HCT116 (cell line): ENCODE measurements at regions of chr13 and their contacts with region 1.

Region 1: DNA sequence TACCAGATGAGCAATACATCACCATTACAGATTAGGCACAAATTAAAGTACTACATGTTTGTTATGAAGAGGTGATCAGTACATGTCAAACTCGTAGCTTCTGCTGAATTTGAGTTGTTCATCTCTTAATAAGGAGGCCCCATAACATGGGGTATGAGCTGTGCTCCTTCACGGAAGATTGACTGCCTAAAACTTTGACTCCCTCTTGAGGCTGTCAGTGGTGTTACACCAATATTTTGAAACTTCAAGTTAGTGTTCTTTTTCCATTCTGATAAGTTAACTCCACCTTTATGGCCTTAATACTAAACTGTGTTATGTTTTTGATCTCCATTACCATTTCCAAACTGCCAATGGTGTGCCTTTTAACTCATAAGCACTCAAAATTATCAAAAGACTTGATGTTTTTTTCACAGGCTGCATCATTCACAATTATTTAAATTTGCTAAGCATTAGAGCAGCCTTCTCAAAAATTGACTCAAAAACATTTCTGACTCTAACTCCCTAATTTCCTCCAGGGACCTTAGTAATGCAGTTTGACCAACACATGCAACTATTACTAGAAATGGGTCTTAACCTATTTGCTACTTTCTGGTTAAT is 1591.5 kb downstream of the PCDH9 start:
- DNase-seq: peak; percentile 35
- ATAC-seq: peak; percentile 75
- H3K4me3 ChIP-seq: no peak overlapping the region
- H3K27ac ChIP-seq: no peak overlapping the region
- H3K4me1 ChIP-seq: no peaks in the 10 kb centered on the region
- H3K27me3 ChIP-seq: no peaks in the 10 kb centered on the region
- CTCF ChIP-seq: peak; percentile 21 to 73 (median 64); a peak in 4 of 6 replicates
- POLR2A ChIP-seq: no peak
- RAD21 ChIP-seq: peak; percentile 65

Region 2: GRCh38 chr13:64154514-64154913 is 1484.2 kb before region 1 on chr13:
- CTCF ChIA-PET with region 1: no interaction called
- POLR2A ChIA-PET with region 1: no interaction called
- RAD21 ChIA-PET with region 1: no interaction called
- intact Hi-C with region 1: loop called (anchors 10 kb)
- DNase-seq: peak; percentile 4
- ATAC-seq: no peak
- H3K4me3 ChIP-seq: no peak overlapping the region
- H3K27ac ChIP-seq: no peak overlapping the region
- H3K4me1 ChIP-seq: no peaks in the 10 kb centered on the region
- H3K27me3 ChIP-seq: no peaks in the 10 kb centered on the region
- CTCF ChIP-seq: peak; percentile 6 to 55 (median 24); a peak in 2 of 6 replicates
- POLR2A ChIP-seq: no peak
- RAD21 ChIP-seq: 0 out of 2 replicates have a peak, but pooled peaks have one; percentile 26

Region 3: DNA sequence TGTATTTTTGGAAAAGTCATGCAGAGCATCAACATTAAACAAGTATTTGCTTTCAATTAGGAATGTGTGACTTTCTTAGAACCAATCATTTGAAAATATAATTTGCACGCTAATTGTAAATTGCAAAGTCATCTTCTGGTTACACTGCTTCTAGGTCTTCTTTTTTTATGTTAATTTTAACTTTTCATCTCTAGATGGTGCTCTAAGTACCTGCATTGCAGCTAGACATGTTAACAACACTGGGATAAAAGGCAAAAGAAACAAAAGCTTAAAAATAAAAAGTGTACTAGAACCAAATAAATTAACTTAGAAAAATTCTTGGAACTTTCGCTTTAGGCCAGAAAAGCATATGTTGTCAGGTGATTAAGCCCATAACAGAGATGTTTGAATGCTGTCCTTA is 1166.8 kb before region 1 on chr13:
- CTCF ChIA-PET with region 1: interaction called, 13 read pairs
- POLR2A ChIA-PET with region 1: no interaction called
- RAD21 ChIA-PET with region 1: no interaction called
- intact Hi-C with region 1: loop called (anchors 5 kb)
- DNase-seq: peak; percentile 8
- ATAC-seq: peak; percentile 74
- H3K4me3 ChIP-seq: no peak overlapping the region
- H3K27ac ChIP-seq: no peak overlapping the region
- H3K4me1 ChIP-seq: no peaks in the 10 kb centered on the region
- H3K27me3 ChIP-seq: no peaks in the 10 kb centered on the region
- CTCF ChIP-seq: peak; percentile 23 to 53 (median 23); a peak in 4 of 6 replicates
- POLR2A ChIP-seq: no peak
- RAD21 ChIP-seq: peak; percentile 64

Region 4: DNA sequence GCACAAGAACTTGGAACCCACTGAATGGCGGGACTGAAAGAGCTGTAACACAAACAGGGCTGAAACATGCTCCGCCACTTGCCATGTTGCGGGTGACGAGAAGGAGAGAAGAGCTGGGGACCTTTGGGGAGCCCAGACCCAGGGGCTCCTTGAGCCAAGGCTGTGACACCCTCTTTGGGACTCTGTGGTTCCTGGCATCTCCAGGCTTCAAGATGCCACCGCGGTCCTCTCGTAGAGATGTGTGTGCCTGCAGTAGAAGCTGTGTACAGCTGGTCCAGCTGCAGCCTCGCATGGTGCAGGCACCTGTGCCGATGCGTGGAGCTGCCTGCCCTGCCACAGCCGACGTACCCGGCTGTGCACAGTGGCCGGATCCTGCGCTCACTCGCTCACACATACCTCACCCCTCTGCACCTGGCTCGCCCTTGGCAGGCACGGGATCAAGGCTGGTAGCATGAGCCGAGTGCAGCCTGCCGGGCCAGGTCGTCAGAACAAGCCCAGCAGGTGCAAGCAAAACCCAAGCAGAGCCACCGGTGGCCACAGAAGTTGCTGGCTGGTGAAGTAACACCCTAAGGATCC is 205.7 kb after region 1 on chr13:
- CTCF ChIA-PET with region 1: no interaction called
- POLR2A ChIA-PET with region 1: no interaction called
- RAD21 ChIA-PET with region 1: no interaction called
- intact Hi-C with region 1: no loop called
- DNase-seq: no peak
- ATAC-seq: no peak
- H3K4me3 ChIP-seq: no peak overlapping the region
- H3K27ac ChIP-seq: no peak overlapping the region
- H3K4me1 ChIP-seq: no peaks in the 10 kb centered on the region
- H3K27me3 ChIP-seq: no peaks in the 10 kb centered on the region
- CTCF ChIP-seq: no peak
- POLR2A ChIP-seq: no peak
- RAD21 ChIP-seq: no peak